ENCODE measurements at regions of chr17 and their contacts with region 1.

Region 1: DNA sequence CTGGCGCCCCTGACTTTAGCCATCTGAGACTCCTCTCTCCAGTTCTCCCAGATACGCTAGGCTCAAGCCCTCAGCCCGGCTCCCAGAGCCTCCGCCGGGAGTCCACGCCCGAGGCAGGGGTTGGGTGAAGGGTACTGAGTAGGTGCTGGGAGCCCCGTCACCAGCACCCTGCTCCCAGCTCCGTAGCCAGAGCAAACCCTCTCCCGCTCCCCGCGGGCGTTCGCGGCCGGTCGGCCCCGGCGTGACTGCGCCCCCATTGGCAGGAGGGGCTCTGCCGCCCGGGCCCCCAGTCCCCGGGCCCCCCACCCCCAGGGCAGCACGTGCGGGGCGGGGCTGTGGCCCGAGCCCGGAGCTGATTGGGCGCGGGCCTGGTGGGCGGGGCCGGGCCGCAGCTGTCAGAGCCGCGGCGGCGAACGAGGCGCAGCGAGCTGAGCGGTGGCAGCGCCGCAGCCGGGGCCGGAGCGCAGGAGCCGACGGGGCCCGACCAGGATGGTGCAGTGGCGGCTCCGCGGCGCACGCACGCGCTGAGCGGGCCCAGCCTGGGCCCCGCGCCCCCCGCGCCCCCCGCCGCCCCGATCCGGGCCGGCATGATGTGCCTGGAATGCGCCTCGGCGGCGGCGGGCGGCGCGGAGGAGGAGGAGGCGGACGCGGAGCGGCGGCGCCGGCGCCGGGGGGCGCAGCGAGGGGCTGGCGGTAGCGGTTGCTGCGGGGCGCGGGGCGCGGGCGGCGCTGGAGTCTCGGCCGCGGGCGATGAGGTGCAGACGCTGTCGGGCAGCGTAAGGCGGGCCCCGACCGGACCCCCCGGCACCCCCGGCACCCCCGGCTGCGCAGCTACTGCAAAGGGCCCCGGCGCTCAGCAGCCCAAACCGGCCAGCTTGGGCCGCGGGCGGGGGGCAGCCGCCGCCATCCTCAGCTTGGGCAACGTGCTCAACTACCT is at the start of gene SPNS2:
- DNase-seq: peak; percentile 65
- ATAC-seq: peak; percentile 86
- H3K4me3 Mint-ChIP-seq: peak within 1 kb of the TSS; percentile 63
- H3K27ac Mint-ChIP-seq: no peak within 1 kb of the TSS
- H3K4me1 Mint-ChIP-seq: peaks cover 27% of the 10 kb centered on the region
- H3K27me3 Mint-ChIP-seq: peaks cover 47% of the 10 kb centered on the region
- total RNA-seq, gene SPNS2: 1.1 to 1.9 TPM

Region 2: DNA sequence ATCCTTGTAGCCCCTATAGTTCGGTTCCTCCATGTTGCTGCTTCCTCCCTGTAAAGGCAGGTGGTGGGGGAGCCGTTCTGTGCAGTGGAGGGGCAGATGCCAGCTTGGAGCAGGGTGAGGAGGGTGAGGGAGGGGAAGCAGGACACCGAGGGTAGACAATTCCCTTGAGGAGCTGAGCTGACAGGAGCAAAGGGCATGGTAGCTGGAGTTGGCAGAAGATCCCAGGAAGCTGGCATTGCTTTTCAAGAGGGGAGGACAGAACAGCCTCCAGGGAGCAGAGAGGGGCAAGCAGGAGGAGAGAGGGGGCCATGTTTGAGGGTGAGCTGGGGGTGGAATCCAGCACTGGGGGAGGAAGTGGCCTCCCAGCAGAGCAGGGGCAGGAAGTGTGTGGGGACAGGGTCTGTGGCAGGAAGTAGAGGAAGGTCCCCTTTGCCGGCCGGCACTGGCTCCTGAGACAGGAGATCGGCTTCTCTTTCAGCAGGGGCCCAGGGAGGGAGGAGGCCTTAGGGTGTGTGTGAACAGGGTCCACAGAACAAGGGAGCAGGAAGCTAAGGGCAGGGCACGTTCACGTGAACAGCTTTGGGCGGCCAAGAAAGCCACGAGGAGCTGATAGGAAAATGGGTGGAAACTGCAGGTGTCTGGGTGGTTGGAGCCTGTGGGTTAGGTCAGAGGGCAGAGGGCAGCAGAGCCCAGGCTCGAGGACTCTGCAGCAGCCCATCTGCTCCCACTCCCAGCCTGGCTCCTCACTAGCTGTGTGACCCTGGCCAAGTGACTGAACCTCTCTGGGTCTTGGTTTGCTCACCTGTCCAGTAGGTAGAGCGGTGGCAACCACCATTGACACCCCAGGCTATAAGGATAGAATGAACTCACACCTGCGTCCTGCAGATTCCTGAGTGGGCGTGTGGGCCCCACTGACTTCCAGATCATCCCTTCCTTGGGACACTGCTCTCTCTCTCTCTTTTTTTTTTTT is 17.5 kb before region 1 on chr17:
- CTCF ChIA-PET with region 1: interaction called, 12 read pairs
- DNase-seq: peak; percentile 89
- ATAC-seq: peak; percentile 84
- H3K4me3 Mint-ChIP-seq: peak overlapping the region; percentile 57
- H3K27ac Mint-ChIP-seq: peak overlapping the region; percentile 95
- H3K4me1 Mint-ChIP-seq: peaks cover 54% of the 10 kb centered on the region
- H3K27me3 Mint-ChIP-seq: no peaks in the 10 kb centered on the region

Region 3: GRCh38 chr17:4665027-4665426 is 166.3 kb after region 1 on chr17:
- CTCF ChIA-PET with region 1: no interaction called
- DNase-seq: no peak
- ATAC-seq: no peak
- H3K4me3 Mint-ChIP-seq: no peak overlapping the region
- H3K27ac Mint-ChIP-seq: no peak overlapping the region
- H3K4me1 Mint-ChIP-seq: no peaks in the 10 kb centered on the region
- H3K27me3 Mint-ChIP-seq: peaks cover 6% of the 10 kb centered on the region

Measured in activated CD8-positive, alpha-beta memory T cell treated with anti-CD3 and anti-CD28 coated beads, Interleukin-2, amount 10 ng/mL, durations not matched to agents 7 days and 5 days (primary cell).